Cardiac septum (tissue), 1 donor: ENCODE measurements at regions of chr7 and their contacts with region 1.

Region 1: GRCh38 chr7:79741684-79742083 is 288.2 kb upstream of the MAGI2 start:
- DNase-seq: no peak

Region 2: DNA sequence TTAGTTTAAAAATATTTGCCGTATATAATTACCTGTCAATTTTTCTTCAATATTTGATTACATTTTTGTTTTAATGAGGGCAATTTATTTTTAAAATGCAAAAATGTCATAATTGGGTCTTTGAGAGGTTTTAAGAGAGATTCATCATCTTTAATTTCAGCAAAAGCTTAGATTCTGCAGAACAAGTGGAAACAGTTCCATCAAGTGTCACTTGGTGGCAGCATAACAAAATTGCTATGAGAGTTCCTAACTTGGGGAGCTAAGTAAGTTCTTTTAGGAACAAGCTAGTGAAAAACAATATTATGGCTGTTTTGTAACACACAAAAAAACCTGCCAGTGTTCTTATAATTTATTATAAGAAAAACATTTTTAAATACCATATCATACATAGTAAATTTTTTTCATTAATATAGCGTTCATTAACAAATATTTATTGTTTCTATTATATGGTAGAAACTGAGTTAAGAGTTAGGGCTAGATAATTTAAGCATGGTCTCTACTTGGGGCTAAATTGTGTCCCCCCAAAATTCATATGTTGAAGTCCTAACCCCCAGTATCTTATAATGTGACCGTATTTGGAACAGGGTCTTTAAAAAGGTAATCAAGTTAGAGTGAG is 443.4 kb before region 1 on chr7:
- intact Hi-C with region 1: loop called (anchors 5 kb)
- DNase-seq: no peak

Region 3: GRCh38 chr7:79781716-79782115 is 40.0 kb after region 1 on chr7:
- intact Hi-C with region 1: no loop called
- DNase-seq: no peak